ENCODE measurements at regions of chr16 and their contacts with region 1.

Region 1: GRCh38 chr16:30761928-30762810 is at the starts of genes CFAP119 and RNF40:
- DNase-seq: peak; percentile 89 to 94 (median 91)
- H3K4me3 ChIP-seq: peak within 1 kb of the TSS; percentile 73 to 97
- H3K4me3 Mint-ChIP-seq: peak within 1 kb of the TSS; percentile 94 to 98 (median 97)
- H3K27ac ChIP-seq: peak within 1 kb of the TSS; percentile 71
- H3K27ac Mint-ChIP-seq: peak within 1 kb of the TSS; percentile 94 to 97 (median 96)
- H3K4me1 ChIP-seq: peaks cover 30% of the 10 kb centered on the region
- H3K4me1 Mint-ChIP-seq: peaks cover 11 to 38% (median 27%) of the 10 kb centered on the region in 4 donors
- H3K27me3 ChIP-seq: no peaks in the 10 kb centered on the region
- H3K27me3 Mint-ChIP-seq: no peaks in the 10 kb centered on the region
- total RNA-seq, gene CFAP119: 2.6 to 3.4 TPM
- total RNA-seq, gene RNF40: 101 to 109 TPM

Region 2: DNA sequence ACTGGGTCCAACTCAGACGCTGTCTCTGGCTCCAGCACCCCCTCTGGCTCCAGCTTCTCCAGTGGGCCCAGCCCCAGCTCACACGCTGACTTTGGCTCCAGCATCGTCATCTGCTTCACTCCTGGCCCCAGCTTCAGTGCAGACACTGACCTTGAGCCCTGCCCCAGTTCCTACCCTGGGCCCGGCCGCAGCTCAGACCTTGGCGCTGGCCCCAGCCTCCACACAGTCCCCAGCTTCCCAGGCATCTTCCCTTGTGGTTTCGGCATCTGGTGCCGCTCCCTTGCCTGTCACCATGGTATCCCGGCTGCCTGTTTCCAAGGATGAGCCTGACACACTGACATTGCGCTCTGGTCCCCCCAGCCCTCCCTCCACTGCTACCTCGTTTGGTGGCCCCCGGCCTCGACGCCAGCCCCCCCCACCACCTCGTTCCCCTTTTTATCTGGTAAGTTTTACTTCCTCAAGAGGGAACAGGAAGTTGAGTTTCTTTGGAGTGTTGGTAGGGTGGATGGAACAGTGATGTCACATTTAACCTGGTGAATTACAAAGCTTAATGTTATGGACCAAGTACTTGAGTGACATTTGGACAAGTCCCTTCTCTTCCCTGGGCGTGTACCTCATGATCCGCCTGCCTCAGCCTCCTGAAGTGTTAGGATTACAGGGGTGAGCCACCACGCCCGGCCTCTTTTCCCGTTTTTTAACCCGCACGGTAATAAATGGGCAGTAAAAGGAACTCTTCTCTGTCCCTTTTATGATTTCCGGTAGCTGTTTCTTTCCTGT is 37.3 kb before region 1 on chr16:
- CTCF ChIA-PET with region 1: no interaction called
- POLR2A ChIA-PET with region 1: no interaction called
- intact Hi-C with region 1: no loop called
- DNase-seq: no peak
- H3K4me3 ChIP-seq: no peak overlapping the region
- H3K4me3 Mint-ChIP-seq: no peak overlapping the region
- H3K27ac ChIP-seq: no peak overlapping the region
- H3K27ac Mint-ChIP-seq: peak overlapping the region in 1 of 7 donors; percentile 68
- H3K4me1 ChIP-seq: no peaks in the 10 kb centered on the region
- H3K4me1 Mint-ChIP-seq: peaks cover 2 to 18% (median 7%) of the 10 kb centered on the region in 4 donors
- H3K27me3 ChIP-seq: no peaks in the 10 kb centered on the region
- H3K27me3 Mint-ChIP-seq: no peaks in the 10 kb centered on the region

Region 3: GRCh38 chr16:30747799-30748634 is 14.2 kb before region 1 on chr16 and contains the start of gene PHKG2:
- CTCF ChIA-PET with region 1: interaction called, 4 read pairs
- POLR2A ChIA-PET with region 1: interaction called, 16 read pairs
- intact Hi-C with region 1: loop called (anchors 1 kb)
- DNase-seq: peak; percentile 94 to 96 (median 95)
- H3K4me3 ChIP-seq: peak within 1 kb of the TSS; percentile 65 to 71
- H3K4me3 Mint-ChIP-seq: peak within 1 kb of the TSS; percentile 89 to 97 (median 91)
- H3K27ac ChIP-seq: peak within 1 kb of the TSS; percentile 60
- H3K27ac Mint-ChIP-seq: peak within 1 kb of the TSS; percentile 73 to 94 (median 89)
- H3K4me1 ChIP-seq: peaks cover 7% of the 10 kb centered on the region
- H3K4me1 Mint-ChIP-seq: peaks cover 14 to 33% (median 20%) of the 10 kb centered on the region in 4 donors
- H3K27me3 ChIP-seq: no peaks in the 10 kb centered on the region
- H3K27me3 Mint-ChIP-seq: no peaks in the 10 kb centered on the region
- total RNA-seq, gene PHKG2: 54.1 to 54.9 TPM

Measured in CD4-positive, alpha-beta memory T cell (primary cell).